SK-MEL-5 (cell line): ENCODE measurements at regions of chr3 and their contacts with region 1.

Region 1: DNA sequence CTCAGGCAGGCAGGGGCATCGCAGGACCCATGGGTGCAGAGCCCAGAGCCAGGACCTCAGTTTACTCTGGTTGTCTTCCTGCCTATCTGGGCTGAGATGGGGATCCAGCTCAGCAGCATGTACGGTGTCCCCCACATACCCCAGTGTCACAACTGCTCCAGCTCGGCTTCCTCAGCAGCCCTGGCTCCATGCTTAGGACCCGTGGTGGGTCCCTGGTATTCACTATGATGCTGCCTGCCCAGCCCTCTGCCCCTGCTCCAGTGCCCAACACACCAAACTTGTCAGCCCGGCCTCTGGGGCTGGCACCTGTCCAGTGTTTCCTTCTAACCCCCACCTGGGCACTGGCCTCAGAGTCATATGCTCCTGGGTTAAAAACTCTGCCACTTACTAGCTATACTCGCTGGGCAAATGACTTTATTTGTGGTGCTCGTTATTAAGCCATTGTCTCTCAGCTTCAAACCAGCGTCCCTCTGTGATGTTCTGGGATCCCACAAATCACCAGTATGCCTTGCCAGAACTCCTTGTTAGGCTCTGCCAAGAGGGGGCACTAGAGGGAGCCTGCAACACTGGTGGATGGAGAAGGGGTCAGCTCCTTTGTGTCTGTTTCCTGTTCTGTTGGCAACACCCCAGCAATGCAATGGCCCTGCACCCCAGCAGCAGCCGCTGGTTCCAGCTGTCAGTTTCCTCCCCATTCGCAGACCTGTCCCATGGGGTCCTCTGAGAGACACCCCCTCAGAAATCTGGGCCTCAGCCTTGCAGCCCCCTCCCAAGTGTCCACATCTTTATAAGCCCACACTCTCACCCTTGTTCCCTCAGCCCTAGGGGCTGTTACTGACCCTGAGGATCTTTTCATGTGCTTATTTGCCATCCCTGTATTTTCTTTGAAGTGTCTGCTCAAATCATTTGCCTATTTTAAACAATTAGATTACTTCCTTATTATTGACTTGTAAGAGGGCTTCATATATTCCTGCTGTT is 24.1 kb upstream of the MRPS22 start:
- DNase-seq: peak; percentile 60

Region 2: GRCh38 chr3:139111392-139112229 is 208.1 kb before region 1 on chr3:
- in situ Hi-C with region 1: loop called (anchors 10 kb)
- DNase-seq: peak; percentile 66

Region 3: DNA sequence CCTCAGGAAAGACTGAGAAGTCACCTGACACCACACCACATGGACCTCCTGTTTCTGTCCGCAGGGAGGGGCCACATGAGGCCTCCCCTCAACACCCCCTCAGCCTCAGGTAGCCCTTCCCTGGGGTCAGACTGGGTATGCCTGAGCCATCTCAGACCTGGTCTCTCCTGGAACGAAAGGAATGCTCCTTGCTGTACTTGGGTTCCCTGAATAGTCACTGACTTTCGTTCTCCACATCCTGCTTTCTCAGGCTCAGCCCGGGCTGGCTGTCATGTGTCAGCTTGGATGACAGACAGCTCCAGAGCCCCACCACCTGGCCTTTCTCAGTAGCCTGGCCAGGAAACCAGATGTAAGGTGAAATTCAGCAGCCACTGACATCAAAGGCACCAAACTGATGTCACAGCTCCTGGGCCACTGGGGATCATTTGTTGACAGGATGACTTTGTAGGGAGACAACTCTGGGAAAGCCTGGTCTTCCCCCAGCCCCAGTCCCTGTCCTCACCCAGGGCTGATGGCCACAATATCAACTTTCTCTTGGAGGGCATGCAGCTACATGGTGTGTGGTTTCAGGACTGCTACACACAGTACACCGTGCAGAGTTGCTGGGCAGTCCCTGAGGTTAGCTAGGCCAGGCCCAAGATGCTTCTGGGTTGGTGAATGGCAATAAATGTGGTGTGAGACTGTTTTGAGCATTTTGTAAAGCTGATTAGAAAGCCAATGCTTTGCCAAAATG is 117.3 kb before region 1 on chr3:
- in situ Hi-C with region 1: no loop called
- DNase-seq: peak; percentile 58

Region 4: GRCh38 chr3:139617672-139618268 is 298.1 kb after region 1 on chr3:
- in situ Hi-C with region 1: no loop called
- DNase-seq: no peak